Upper lobe of right lung (tissue), 1 donor: ENCODE measurements at regions of chr11 and their contacts with region 1.

Region 1: DNA sequence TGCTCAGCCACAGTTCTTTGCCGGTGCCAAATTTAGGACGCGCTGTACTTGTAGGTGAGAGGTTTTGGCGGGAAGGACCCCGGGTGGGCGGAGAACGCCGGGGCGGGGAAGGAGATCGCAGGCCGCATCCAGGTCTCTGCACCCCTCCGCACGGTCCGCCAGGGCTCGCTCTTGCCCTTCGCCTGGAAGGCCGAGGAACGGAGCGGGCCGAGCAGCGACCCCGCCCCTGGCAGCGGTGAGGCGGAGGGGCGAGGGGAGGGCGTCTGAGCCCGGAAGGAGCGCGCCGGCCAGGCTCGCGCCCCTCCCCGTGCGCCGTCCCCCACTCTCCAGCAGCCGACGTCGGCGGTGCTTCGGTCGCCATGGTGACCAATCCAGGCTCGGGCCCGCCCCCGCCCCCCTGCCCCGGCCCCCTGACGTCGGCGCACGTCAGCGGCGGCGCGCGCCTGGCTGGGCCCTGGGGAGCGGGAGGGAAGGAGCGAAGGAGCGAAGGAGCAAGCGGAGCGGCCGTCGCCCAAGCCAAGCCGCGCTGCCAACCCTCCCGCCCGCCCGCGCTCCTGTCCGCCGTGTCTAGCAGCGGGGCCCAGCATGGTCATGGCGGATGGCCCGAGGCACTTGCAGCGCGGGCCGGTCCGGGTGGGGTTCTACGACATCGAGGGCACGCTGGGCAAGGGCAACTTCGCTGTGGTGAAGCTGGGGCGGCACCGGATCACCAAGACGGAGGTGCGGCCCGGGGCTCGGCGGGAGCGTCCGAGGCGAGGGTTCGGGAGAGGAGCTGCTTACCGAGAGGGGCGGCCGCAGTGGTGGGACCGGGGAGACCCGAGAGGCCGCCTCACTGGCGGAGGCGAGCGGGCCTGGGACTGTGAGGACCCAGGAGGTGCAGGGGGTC is at the start of gene SIK2:
- DNase-seq: peak; percentile 98
- ATAC-seq: peak; percentile 98
- H3K4me3 ChIP-seq: peak within 1 kb of the TSS; percentile 84
- H3K27ac ChIP-seq: peak within 1 kb of the TSS; percentile 94
- H3K4me1 ChIP-seq: peaks cover 35% of the 10 kb centered on the region
- H3K27me3 ChIP-seq: no peaks in the 10 kb centered on the region
- CTCF ChIP-seq: peak; percentile 90
- total RNA-seq, gene SIK2: 32.6 TPM

Region 2: GRCh38 chr11:111777094-111778046 is 175.1 kb after region 1 on chr11:
- intact Hi-C with region 1: loop called (anchors 5 kb)
- DNase-seq: no peak
- ATAC-seq: peak; percentile 92
- H3K4me3 ChIP-seq: no peak overlapping the region
- H3K27ac ChIP-seq: no peak overlapping the region
- H3K4me1 ChIP-seq: peaks cover 5% of the 10 kb centered on the region
- H3K27me3 ChIP-seq: no peaks in the 10 kb centered on the region
- CTCF ChIP-seq: peak; percentile 80

Region 3: GRCh38 chr11:111878849-111879636 is 276.8 kb after region 1 on chr11 and contains the starts of genes CFAP68 and FDXACB1:
- intact Hi-C with region 1: no loop called
- DNase-seq: peak; percentile 97
- ATAC-seq: peak; percentile 98
- H3K4me3 ChIP-seq: peak within 1 kb of the TSS; percentile 73
- H3K27ac ChIP-seq: peak within 1 kb of the TSS; percentile 95
- H3K4me1 ChIP-seq: peaks cover 7% of the 10 kb centered on the region
- H3K27me3 ChIP-seq: no peaks in the 10 kb centered on the region
- CTCF ChIP-seq: peak; percentile 95
- total RNA-seq, gene CFAP68: 20.0 TPM
- total RNA-seq, gene FDXACB1: 1.9 TPM

Region 4: DNA sequence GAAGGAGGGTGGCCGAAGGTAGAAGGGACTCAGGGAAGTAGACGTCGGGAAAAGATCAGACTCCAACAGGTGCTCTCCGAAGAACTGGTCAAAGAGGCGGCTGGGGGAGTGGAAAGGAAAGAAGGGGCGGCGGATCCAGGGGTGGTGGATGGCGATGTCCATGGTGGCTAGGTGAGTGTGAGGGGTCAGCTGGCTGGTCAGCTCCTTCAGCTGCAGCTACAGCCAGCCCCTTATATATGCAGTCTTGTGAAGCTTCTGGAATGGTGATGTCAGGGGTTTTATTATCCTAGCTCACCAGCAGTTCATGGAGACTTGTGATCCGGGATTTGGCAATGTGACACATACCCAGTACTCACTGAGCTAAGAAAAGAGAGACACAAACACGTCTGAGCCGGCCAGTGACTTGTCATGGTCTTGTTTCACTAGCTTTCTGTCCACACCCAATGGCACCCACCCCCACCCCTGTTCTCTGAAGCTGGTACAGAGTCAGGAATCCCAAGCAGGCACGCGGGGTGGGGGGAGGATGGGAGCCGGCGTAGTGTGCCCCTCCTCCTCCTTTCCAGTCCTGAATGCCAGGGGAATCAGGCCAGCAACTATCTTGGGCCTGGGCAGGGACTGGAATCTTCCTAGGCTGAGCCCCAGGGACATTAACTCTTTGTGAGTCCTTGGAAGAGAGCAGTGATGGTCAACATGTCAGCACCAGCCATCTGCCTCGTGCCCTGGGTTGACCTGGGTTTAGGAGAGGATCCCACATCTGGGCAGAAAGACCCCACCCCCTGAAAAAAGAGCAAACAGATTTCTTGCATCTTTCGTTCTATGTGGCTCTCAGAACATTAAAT is 309.6 kb after region 1 on chr11 and contains the start of gene CRYAB:
- intact Hi-C with region 1: no loop called
- DNase-seq: peak; percentile 78
- ATAC-seq: peak; percentile 91
- H3K4me3 ChIP-seq: peak within 1 kb of the TSS; percentile 51
- H3K27ac ChIP-seq: peak within 1 kb of the TSS; percentile 73
- H3K4me1 ChIP-seq: no peaks in the 10 kb centered on the region
- H3K27me3 ChIP-seq: peaks cover 6% of the 10 kb centered on the region
- CTCF ChIP-seq: no peak
- total RNA-seq, gene CRYAB: 113 TPM